Heart right ventricle (tissue), 16 donors: ENCODE measurements at regions of chr9 and their contacts with region 1.

Region 1: GRCh38 chr9:127968717-127969383 is 11.9 kb downstream of the EEIG1 start:
- DNase-seq: peak; percentile 76 to 80
- ATAC-seq: peak in 5 of 8 donors; percentile 18 to 46 (median 36)
- H3K4me3 ChIP-seq: no peak overlapping the region
- H3K27ac ChIP-seq: peak overlapping the region; percentile 9 to 93 (median 70)
- H3K4me1 ChIP-seq: peaks cover 67 to 100% (median 97%) of the 10 kb centered on the region in 9 donors
- H3K27me3 ChIP-seq: no peaks in the 10 kb centered on the region
- CTCF ChIP-seq: no peak

Region 2: GRCh38 chr9:129242941-129243561 is 1274.2 kb after region 1 on chr9:
- intact Hi-C with region 1: loop called in 1 of 10 experiments (anchors 10 kb)
- DNase-seq: no peak
- ATAC-seq: peak in 7 of 8 donors; percentile 41 to 74 (median 57)
- H3K4me3 ChIP-seq: no peak overlapping the region
- H3K27ac ChIP-seq: peak overlapping the region in 2 of 10 donors; percentile 30 to 44
- H3K4me1 ChIP-seq: peaks cover 0 to 8% (median 0%) of the 10 kb centered on the region in 9 donors
- H3K27me3 ChIP-seq: no peaks in the 10 kb centered on the region
- CTCF ChIP-seq: no peak